ENCODE measurements at regions of chr19 and their contacts with region 1.

Region 1: GRCh38 chr19:14383661-14384555 is 2.7 kb downstream of the ADGRE5 start:
- DNase-seq: peak; percentile 57
- H3K4me3 Mint-ChIP-seq: peak overlapping the region; percentile 99
- H3K27ac Mint-ChIP-seq: peak overlapping the region; percentile 98
- H3K4me1 Mint-ChIP-seq: peaks cover 44% of the 10 kb centered on the region
- H3K27me3 Mint-ChIP-seq: no peaks in the 10 kb centered on the region

Region 2: GRCh38 chr19:14160017-14160703 is 223.7 kb before region 1 on chr19:
- CTCF ChIA-PET with region 1: no interaction called
- POLR2A ChIA-PET with region 1: no interaction called
- DNase-seq: no peak
- H3K4me3 Mint-ChIP-seq: no peak overlapping the region
- H3K27ac Mint-ChIP-seq: no peak overlapping the region
- H3K4me1 Mint-ChIP-seq: no peaks in the 10 kb centered on the region
- H3K27me3 Mint-ChIP-seq: no peaks in the 10 kb centered on the region

Region 3: DNA sequence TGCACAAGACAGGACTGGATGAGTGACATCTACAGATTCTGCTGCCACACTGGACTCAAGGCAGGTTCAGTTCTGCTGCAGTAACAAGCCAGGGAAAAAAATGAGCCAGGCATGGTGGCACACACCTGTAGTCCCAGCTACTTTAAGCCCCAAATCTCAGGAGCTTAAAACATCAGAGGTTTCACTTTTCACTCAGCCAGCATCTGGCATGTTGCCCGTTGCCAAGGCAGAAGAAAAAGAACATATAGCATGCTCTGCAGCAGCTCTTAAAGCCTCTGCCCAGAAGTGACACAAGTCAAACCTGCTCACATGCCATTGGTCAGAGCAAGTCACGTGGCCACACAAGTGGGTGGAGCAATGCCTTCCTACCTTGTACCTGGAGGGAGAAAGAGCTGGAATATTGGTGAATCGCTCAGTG is 17.4 kb before region 1 on chr19:
- CTCF ChIA-PET with region 1: interaction called, 74 read pairs
- POLR2A ChIA-PET with region 1: interaction called, 11 read pairs
- DNase-seq: peak; percentile 96
- H3K4me3 Mint-ChIP-seq: peak overlapping the region; percentile 50
- H3K27ac Mint-ChIP-seq: peak overlapping the region; percentile 99
- H3K4me1 Mint-ChIP-seq: peaks cover 76% of the 10 kb centered on the region
- H3K27me3 Mint-ChIP-seq: no peaks in the 10 kb centered on the region

Region 4: GRCh38 chr19:14405758-14406644 is 22.1 kb after region 1 on chr19:
- CTCF ChIA-PET with region 1: interaction called, 21 read pairs
- POLR2A ChIA-PET with region 1: interaction called, 3 read pairs
- DNase-seq: peak; percentile 88
- H3K4me3 Mint-ChIP-seq: no peak overlapping the region
- H3K27ac Mint-ChIP-seq: peak overlapping the region; percentile 75
- H3K4me1 Mint-ChIP-seq: peaks cover 31% of the 10 kb centered on the region
- H3K27me3 Mint-ChIP-seq: no peaks in the 10 kb centered on the region

Region 5: DNA sequence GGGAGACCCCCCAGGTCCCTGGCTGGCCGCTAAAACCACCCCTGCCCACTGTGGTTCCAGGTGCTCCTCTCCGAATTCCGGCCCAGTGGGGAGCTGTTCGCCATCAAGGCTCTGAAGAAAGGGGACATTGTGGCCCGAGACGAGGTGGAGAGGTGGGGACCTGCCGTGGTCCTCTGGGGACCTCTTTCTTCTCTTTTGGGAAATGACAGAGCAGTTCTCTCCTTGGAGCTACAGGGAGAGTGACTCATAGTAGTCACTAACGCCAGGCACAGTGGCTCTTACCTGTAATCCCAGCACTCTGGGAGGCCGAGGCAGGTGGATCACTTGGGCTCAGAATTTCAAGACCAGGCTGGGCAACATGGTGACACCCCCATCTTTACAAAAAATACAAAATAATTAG is 83.9 kb after region 1 on chr19:
- CTCF ChIA-PET with region 1: no interaction called
- POLR2A ChIA-PET with region 1: no interaction called
- DNase-seq: no peak
- H3K4me3 Mint-ChIP-seq: no peak overlapping the region
- H3K27ac Mint-ChIP-seq: no peak overlapping the region
- H3K4me1 Mint-ChIP-seq: peaks cover 3% of the 10 kb centered on the region
- H3K27me3 Mint-ChIP-seq: peaks cover 3% of the 10 kb centered on the region